Psoas muscle (tissue), 8 donors: ENCODE measurements at regions of chr13 and their contacts with region 1.

Region 1: GRCh38 chr13:38872693-38873092 is 117.9 kb downstream of the STOML3 start:
- DNase-seq: peak; percentile 25 to 65
- ATAC-seq: peak; percentile 45 to 86 (median 68)
- H3K4me3 ChIP-seq: no peak overlapping the region
- H3K27ac ChIP-seq: no peak overlapping the region
- H3K4me1 ChIP-seq: no peaks in the 10 kb centered on the region
- H3K27me3 ChIP-seq: no peaks in the 10 kb centered on the region
- CTCF ChIP-seq: peak; percentile 44

Region 2: DNA sequence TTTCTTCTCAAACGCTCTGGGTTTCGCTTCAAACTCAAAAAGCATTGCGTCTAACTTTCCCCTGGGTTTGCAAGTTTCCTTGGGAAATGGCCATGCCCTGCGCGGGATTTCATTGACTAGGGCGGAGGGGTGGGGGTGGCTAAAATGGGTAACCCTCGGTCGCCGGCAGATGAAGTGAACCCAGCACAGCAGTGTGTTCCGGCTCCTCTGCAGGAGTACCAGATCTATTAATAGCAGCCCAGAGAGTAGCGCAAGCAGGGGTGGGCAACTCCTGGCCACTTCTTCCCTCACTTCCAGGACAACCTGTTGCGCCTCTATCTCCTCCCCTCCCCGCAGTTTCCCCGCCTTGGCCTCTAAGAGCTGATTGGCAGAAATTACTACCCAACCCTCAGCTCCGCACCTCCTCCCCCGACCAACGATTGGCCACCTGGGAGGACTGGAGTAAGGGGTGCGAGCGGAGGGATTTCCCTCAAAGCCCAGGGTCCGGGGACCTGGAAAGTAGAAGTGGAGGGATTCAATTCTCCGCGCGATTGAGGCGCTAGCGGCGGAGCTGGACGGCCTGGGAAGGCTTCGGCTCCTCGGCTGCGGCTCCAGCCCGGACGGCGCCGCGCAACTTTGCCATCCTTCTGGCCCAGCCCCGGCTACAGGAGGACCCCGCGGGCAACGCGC is 186.0 kb before region 1 on chr13 and contains the start of gene FREM2:
- intact Hi-C with region 1: loop called in 1 of 2 experiments (anchors 10 kb)
- DNase-seq: peak; percentile 20 to 66
- ATAC-seq: peak; percentile 89 to 95 (median 90)
- H3K4me3 ChIP-seq: peak within 1 kb of the TSS; percentile 89
- H3K27ac ChIP-seq: peak within 1 kb of the TSS; percentile 63
- H3K4me1 ChIP-seq: no peaks in the 10 kb centered on the region
- H3K27me3 ChIP-seq: no peaks in the 10 kb centered on the region
- CTCF ChIP-seq: no peak
- total RNA-seq, gene FREM2: 2.2 to 9.4 (median 3.2) TPM

Region 3: DNA sequence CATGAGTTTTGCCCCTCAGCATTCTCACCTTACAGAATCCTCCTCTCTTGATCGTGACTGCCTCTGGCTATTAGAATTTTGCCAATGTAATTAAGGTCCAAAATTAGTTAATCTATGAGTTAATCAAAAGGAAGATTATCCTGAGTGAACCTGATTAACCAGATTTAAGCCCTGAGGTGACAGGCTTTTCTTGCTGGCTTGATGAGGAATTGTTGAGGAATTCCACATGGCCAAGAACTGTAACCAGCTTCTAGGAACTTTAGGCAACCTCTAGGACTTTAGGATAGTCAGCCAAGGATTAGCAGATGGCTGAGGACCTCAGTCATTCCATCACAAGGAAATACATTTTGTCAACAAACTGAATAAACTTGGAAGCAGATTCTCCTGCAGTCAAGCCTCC is 33.1 kb after region 1 on chr13:
- intact Hi-C with region 1: loop called (anchors 5 kb)
- DNase-seq: no peak
- ATAC-seq: no peak
- H3K4me3 ChIP-seq: no peak overlapping the region
- H3K27ac ChIP-seq: no peak overlapping the region
- H3K4me1 ChIP-seq: no peaks in the 10 kb centered on the region
- H3K27me3 ChIP-seq: no peaks in the 10 kb centered on the region
- CTCF ChIP-seq: no peak

Region 4: GRCh38 chr13:39016787-39017186 is 144.1 kb after region 1 on chr13:
- intact Hi-C with region 1: loop called in 1 of 2 experiments (anchors 10 kb)
- DNase-seq: no peak
- ATAC-seq: peak; percentile 80 to 92 (median 82)
- H3K4me3 ChIP-seq: no peak overlapping the region
- H3K27ac ChIP-seq: peak overlapping the region; percentile 75
- H3K4me1 ChIP-seq: peaks cover 14% of the 10 kb centered on the region
- H3K27me3 ChIP-seq: no peaks in the 10 kb centered on the region
- CTCF ChIP-seq: peak; percentile 51